Endothelial cell of umbilical vein (primary cell): ENCODE measurements at regions of chr1 and their contacts with region 1.

Region 1: DNA sequence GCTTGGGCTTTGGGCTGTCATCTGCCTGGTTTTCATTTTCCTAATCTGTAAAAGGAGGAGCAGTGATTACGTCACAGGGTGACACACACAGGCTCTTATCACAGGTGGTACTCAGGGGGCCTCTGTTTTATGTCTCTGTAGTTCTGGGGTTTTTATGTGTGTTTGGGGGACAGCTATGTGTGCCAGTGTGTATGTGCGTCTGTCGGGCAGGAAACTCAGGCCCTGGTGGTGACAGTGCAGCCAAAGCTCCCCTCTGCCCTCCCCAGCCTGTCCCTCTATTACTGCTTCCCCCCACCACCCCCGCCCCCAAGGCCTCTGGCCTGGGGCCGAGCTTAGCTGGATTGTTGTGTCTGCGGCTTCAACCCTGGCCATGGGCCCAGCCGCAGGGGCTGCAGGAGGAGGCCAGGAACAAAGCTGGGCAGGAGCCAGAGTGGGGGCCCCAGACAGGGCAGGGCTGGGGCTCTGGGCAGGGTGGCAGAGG is 13.3 kb downstream of the MFAP2 start:
- DNase-seq: peak; percentile 89
- H3K4me3 ChIP-seq: no peak overlapping the region
- H3K27ac ChIP-seq: peak overlapping the region; percentile 57
- H3K4me1 ChIP-seq: peaks cover 11% of the 10 kb centered on the region
- H3K27me3 ChIP-seq: no peaks in the 10 kb centered on the region
- CTCF ChIP-seq: no peak
- POLR2A ChIP-seq: no peak

Region 2: DNA sequence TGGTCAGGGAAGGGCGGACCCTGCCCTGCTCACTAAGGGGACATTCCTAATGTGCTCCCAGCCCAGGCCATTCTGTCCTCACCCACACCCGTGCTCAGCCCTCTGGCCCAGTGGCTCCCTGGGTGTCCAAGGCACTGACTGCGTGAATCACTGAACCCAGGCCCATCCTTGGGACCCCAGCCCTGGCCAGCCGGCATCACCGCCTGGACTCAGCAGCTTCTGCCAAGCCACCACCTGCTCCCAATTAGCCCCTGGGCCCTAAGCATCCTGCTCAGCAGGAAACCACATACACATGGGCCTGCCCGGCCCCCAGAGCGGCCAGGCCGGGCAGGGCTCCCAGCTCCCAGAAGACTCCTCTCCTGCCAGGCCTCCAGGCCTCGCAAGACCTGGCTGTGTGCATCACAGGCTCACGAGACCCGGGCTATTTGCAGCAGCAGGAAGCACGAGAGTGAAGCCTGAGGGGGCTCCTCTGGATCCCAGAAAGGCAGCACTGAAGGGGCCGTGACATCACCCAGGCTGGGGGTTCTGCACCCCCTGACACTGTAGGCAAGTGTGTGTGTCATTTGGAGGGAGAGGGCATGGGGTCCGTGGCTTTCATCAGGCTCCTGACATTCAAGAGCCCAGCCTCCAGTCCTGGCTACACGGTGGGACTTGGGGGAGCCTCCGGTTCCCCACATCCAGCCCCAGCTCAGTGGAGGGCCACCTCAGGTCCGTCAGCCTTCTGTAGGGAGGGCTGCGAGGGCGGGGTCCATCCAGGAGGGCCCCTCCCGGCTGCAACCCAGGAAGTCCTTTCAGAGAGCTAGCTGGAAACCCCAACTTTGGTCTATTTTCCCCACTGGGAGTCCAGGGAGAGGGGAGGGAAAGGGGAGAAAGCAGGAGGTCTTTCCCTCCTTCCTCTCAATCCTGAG is 11.7 kb after region 1 on chr1:
- CTCF ChIA-PET with region 1: interaction called, 25 read pairs
- POLR2A ChIA-PET with region 1: interaction called, 5 read pairs
- dilution Hi-C with region 1: no loop called
- intact Hi-C with region 1: loop called (anchors 1 kb)
- DNase-seq: peak; percentile 61
- H3K4me3 ChIP-seq: peak overlapping the region in 2 of 3 experiments; percentile 52 to 72
- H3K27ac ChIP-seq: no peak overlapping the region
- H3K4me1 ChIP-seq: peaks cover 14% of the 10 kb centered on the region
- H3K27me3 ChIP-seq: no peaks in the 10 kb centered on the region
- CTCF ChIP-seq: no peak
- POLR2A ChIP-seq: no peak

Region 3: DNA sequence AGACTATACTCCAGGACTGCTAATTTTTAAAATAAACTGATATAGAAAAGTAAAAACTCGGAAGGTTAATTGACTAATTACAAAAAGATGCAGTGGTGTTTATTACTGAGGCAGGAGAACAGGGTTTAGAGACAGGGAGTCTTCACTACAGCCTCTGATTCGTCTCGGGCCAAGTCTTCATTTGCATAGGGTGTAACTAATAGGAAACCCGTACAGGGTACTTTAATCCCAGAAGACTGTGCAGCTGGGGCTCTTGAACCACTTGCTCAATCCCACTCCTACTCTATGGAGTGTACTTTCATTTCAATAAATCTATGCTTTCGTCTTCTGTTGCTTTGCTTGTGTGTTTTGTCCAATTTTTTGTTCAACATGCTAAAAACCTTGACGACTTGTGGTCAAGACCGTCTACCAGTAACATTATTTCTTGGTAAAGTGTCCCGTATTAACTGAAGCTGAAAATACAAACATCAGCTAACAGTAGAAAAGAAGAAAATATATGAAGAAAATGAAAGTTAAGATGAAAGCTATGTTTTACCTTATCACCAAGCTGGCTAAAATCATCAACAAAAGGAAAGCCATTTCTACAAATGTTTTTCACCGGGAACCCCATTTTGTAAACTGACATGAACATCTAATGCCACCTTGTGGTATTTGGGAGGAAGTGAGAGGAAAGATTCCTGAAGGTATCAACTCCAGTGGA is 78.6 kb after region 1 on chr1:
- CTCF ChIA-PET with region 1: interaction called, 32 read pairs
- POLR2A ChIA-PET with region 1: interaction called, 3 read pairs
- dilution Hi-C with region 1: no loop called
- intact Hi-C with region 1: loop called (anchors 1 kb)
- DNase-seq: peak; percentile 60
- H3K4me3 ChIP-seq: no peak overlapping the region
- H3K27ac ChIP-seq: no peak overlapping the region
- H3K4me1 ChIP-seq: peaks cover 3% of the 10 kb centered on the region
- H3K27me3 ChIP-seq: no peaks in the 10 kb centered on the region
- CTCF ChIP-seq: peak; percentile 51 to 58
- POLR2A ChIP-seq: no peak

Region 4: GRCh38 chr1:18632783-18633421 is 1665.8 kb after region 1 on chr1:
- CTCF ChIA-PET with region 1: no interaction called
- POLR2A ChIA-PET with region 1: no interaction called
- dilution Hi-C with region 1: no loop called
- intact Hi-C with region 1: no loop called
- DNase-seq: no peak
- H3K4me3 ChIP-seq: no peak overlapping the region
- H3K27ac ChIP-seq: no peak overlapping the region
- H3K4me1 ChIP-seq: no peaks in the 10 kb centered on the region
- H3K27me3 ChIP-seq: peaks cover 81 to 90% of the 10 kb centered on the region in 2 experiments
- CTCF ChIP-seq: no peak
- POLR2A ChIP-seq: no peak